ENCODE measurements at regions of chr1 and their contacts with region 1.

Region 1: GRCh38 chr1:111507411-111508201 is 4.2 kb upstream of the ADORA3 start:
- DNase-seq: peak; percentile 77
- H3K4me3 Mint-ChIP-seq: peak overlapping the region; percentile 53
- H3K27ac Mint-ChIP-seq: peak overlapping the region; percentile 92
- H3K4me1 Mint-ChIP-seq: peaks cover 49% of the 10 kb centered on the region
- H3K27me3 Mint-ChIP-seq: no peaks in the 10 kb centered on the region

Region 2: GRCh38 chr1:111448918-111449702 is 58.5 kb before region 1 on chr1 and contains the starts of genes ATP5PB and WDR77:
- CTCF ChIA-PET with region 1: interaction called, 5 read pairs
- intact Hi-C with region 1: loop called (anchors 2 kb)
- DNase-seq: peak; percentile 96
- H3K4me3 Mint-ChIP-seq: peak within 1 kb of the TSS; percentile 100
- H3K27ac Mint-ChIP-seq: peak within 1 kb of the TSS; percentile 96
- H3K4me1 Mint-ChIP-seq: peaks cover 71% of the 10 kb centered on the region
- H3K27me3 Mint-ChIP-seq: no peaks in the 10 kb centered on the region
- total RNA-seq, gene ATP5PB: 324 to 331 TPM
- total RNA-seq, gene WDR77: 43.1 to 48.8 TPM

Region 3: DNA sequence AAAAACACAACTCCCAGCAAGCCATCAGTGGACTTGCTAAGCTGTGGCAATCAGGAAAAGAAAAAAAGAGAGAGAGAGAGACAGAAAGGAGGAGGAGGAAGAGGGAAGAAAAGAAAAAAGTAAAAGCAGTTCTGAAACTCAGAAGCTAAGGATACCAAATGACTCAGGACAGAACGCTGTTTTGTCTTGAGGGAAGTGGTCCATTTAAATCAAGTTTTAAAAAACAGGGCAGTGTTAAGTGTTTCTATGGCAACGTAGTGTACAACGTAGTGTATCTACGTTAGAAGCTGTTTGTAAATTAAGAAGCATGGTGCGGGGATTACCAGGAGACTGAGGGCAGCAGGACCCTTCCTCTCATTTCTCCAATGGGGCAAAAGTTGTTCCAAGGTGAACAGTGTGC is 10.0 kb before region 1 on chr1:
- CTCF ChIA-PET with region 1: interaction called, 43 read pairs
- intact Hi-C with region 1: loop called (anchors 1 kb)
- DNase-seq: no peak
- H3K4me3 Mint-ChIP-seq: no peak overlapping the region
- H3K27ac Mint-ChIP-seq: peak overlapping the region; percentile 6
- H3K4me1 Mint-ChIP-seq: peaks cover 27% of the 10 kb centered on the region
- H3K27me3 Mint-ChIP-seq: no peaks in the 10 kb centered on the region

Region 4: GRCh38 chr1:111603979-111604378 is 96.4 kb after region 1 on chr1:
- CTCF ChIA-PET with region 1: interaction called, 14 read pairs
- intact Hi-C with region 1: loop called (anchors 1 kb)
- DNase-seq: peak; percentile 90
- H3K4me3 Mint-ChIP-seq: peak overlapping the region; percentile 7
- H3K27ac Mint-ChIP-seq: peak overlapping the region; percentile 92
- H3K4me1 Mint-ChIP-seq: peaks cover 76% of the 10 kb centered on the region
- H3K27me3 Mint-ChIP-seq: no peaks in the 10 kb centered on the region

Region 5: DNA sequence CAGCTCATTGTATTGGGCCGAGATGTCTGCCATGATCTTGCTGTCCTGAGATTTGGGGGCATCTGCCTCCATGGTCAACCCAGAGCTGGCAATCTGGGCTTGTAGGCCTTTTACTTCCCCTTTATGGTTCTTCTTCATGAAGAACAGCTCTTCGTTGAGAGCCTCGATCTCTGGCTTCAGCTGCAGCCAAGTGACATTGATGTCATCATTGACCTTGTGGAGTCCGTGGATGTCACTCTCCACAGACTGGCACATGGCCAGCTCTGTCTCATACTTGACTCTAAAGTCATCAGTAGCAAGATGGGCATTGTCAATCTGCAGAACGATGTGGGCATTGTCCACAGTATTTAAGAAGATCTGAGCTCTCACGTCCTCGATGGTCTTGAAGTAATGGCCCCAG is 141.2 kb after region 1 on chr1:
- CTCF ChIA-PET with region 1: interaction called, 10 read pairs
- intact Hi-C with region 1: no loop called
- DNase-seq: no peak
- H3K4me3 Mint-ChIP-seq: no peak overlapping the region
- H3K27ac Mint-ChIP-seq: peak overlapping the region; percentile 43
- H3K4me1 Mint-ChIP-seq: peaks cover 77% of the 10 kb centered on the region
- H3K27me3 Mint-ChIP-seq: no peaks in the 10 kb centered on the region

Region 6: GRCh38 chr1:111709986-111710385 is 202.4 kb after region 1 on chr1:
- CTCF ChIA-PET with region 1: interaction called, 56 read pairs
- intact Hi-C with region 1: no loop called
- DNase-seq: no peak
- H3K4me3 Mint-ChIP-seq: no peak overlapping the region
- H3K27ac Mint-ChIP-seq: peak overlapping the region; percentile 28
- H3K4me1 Mint-ChIP-seq: peaks cover 17% of the 10 kb centered on the region
- H3K27me3 Mint-ChIP-seq: no peaks in the 10 kb centered on the region

Region 7: GRCh38 chr1:111755331-111756123 is 247.9 kb after region 1 on chr1 and contains the start of gene DDX20:
- CTCF ChIA-PET with region 1: interaction called, 77 read pairs
- intact Hi-C with region 1: loop called (anchors 1 kb)
- DNase-seq: peak; percentile 95
- H3K4me3 Mint-ChIP-seq: peak within 1 kb of the TSS; percentile 82
- H3K27ac Mint-ChIP-seq: peak within 1 kb of the TSS; percentile 97
- H3K4me1 Mint-ChIP-seq: peaks cover 34% of the 10 kb centered on the region
- H3K27me3 Mint-ChIP-seq: no peaks in the 10 kb centered on the region
- total RNA-seq, gene DDX20: 11.4 to 13.3 TPM